ENCODE measurements at regions of chr12 and their contacts with region 1.

Region 1: DNA sequence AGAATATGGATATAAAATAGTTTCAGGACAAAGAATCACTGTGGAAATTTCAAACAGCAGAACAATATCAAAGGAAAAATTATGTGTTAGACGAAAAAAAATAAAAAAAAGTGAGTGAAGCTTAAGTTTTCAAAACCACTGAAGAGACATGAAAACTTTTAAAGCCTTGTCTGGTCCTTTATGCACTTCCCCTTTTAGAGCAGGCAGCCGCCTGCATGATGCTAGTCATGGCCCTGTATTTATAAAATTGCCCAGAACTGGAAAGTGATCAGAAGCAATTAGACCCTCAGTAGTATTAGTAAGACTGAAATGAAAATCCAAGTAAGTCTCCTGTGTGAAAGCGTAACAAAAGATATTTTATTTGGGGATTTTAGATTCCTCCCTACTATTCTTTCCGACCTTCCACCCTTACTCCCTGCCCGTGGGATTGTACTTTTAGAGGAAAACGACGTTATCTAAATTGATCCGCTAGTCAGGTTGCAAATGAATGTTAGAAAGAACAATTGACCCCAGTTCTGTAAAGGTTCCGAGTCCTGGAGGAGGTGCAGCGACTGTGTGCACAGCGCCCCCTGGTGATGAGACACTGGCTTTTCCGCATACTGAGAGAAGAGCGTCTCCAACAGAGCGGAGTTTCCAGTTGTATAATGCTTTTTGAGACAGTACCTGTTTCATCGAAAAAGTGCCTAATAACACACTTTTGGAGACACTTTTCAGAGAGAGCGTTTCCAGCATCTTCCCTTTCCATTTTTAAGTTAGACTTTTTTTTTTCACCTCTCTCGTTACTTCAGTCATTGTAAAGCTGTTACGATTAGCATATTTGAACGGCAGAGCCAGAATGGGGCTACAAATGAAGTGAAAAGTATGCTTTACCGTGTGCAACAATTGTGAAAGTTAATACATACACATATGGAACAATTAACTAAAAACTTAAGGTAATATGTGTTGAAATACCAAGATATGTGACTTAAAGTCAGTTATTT is 12.4 kb downstream of the MGST1 start:
- DNase-seq: peak; percentile 66
- H3K4me3 Mint-ChIP-seq: no peak overlapping the region
- H3K27ac Mint-ChIP-seq: peak overlapping the region; percentile 39
- H3K4me1 Mint-ChIP-seq: peaks cover 38% of the 10 kb centered on the region
- H3K27me3 Mint-ChIP-seq: no peaks in the 10 kb centered on the region
- CTCF ChIP-seq: peak; percentile 70

Region 2: DNA sequence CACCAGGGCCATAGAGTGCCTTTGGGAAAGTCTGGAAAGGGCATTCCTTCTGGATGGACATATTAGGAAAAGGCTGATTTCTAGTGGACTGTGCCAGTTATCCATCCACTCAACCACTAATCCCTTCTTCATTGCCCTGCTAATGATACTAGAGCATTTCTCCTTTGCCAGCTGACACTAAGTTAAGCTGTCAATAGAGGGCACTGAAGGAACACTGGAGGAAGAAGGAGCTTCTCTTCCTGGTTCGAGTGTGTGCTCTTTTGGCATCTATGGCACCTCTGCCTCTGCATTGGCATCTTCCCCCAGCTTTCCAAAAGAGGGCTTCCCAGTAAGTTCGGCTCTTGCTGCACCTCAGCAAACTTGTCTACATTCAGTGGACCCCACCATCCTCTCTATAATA is 283.2 kb before region 1 on chr12:
- CTCF ChIA-PET with region 1: no interaction called
- POLR2A ChIA-PET with region 1: no interaction called
- intact Hi-C with region 1: loop called (anchors 1 kb)
- DNase-seq: peak; percentile 69
- H3K4me3 Mint-ChIP-seq: no peak overlapping the region
- H3K27ac Mint-ChIP-seq: no peak overlapping the region
- H3K4me1 Mint-ChIP-seq: no peaks in the 10 kb centered on the region
- H3K27me3 Mint-ChIP-seq: no peaks in the 10 kb centered on the region
- CTCF ChIP-seq: peak; percentile 40

Region 3: DNA sequence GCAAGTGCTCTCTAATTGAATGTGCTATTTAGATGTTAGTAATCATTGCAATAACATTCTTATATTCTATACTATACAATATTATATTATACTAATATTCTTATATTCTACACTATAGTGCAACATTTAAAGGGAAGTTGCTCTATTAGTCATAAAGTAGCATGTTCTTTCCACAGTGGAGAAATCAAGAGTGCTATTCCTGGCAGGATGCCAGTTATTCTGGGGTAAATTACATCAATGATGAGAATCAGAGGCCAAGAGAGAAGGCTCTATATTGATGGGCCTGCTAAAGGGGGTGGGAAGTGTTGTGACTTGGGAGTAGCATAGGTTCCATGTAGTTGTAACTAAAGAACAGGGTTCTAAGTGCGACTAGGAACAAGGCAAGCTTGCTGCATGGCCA is 203.9 kb before region 1 on chr12:
- CTCF ChIA-PET with region 1: interaction called, 11 read pairs
- POLR2A ChIA-PET with region 1: no interaction called
- intact Hi-C with region 1: no loop called
- DNase-seq: peak; percentile 51
- H3K4me3 Mint-ChIP-seq: no peak overlapping the region
- H3K27ac Mint-ChIP-seq: no peak overlapping the region
- H3K4me1 Mint-ChIP-seq: peaks cover 14% of the 10 kb centered on the region
- H3K27me3 Mint-ChIP-seq: no peaks in the 10 kb centered on the region
- CTCF ChIP-seq: no peak

Region 4: DNA sequence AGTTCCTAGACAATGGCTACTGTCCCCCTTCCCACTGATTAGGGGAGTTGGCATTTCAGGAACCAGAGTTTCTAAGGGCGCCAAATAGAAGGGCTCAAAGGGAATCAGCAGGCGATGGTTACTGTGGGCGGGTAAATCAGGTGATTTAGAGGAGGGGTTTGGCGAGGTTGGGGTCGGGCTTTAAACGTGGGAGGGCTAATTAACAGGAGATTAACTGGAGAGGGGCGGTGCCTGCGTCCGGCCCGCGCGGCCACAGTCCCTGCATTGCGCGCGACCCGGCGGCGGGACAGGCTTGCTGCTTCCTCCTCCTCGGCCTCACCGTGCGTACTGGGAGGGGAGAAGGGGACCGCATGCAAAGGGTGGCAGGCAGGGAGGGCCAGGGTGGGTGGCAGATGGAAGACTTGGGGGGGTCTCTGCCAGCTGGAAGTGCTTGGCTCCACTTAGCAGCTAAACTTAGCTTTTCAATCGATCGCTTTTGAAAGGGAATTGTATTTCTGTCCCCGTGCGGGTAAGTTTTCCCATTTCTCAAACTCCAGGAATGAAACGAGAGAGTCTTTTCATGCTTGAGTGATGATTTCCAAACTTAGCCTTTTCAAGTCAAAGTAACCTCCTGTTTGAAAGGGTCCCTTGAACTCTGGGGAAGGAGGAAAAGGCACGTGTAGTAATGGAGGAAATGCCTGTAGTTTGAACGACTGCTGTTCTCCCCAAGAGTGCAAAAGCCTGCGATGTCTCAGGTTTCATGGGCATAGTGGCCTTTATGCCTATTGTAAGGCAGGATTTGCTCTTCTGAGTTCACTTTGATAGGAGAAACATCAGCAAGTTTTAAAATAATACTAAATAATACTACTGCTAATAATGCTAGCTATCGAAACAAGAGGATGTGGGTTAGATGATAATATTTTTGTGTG is 12.2 kb before region 1 on chr12 and contains the start of gene MGST1:
- CTCF ChIA-PET with region 1: interaction called, 20 read pairs
- POLR2A ChIA-PET with region 1: interaction called, 7 read pairs
- intact Hi-C with region 1: loop called (anchors 2 kb)
- DNase-seq: peak; percentile 85
- H3K4me3 Mint-ChIP-seq: peak within 1 kb of the TSS; percentile 85
- H3K27ac Mint-ChIP-seq: peak within 1 kb of the TSS; percentile 94
- H3K4me1 Mint-ChIP-seq: peaks cover 31% of the 10 kb centered on the region
- H3K27me3 Mint-ChIP-seq: no peaks in the 10 kb centered on the region
- CTCF ChIP-seq: no peak
- total RNA-seq, gene MGST1: 375 and 415 TPM in 2 replicates

Region 5: DNA sequence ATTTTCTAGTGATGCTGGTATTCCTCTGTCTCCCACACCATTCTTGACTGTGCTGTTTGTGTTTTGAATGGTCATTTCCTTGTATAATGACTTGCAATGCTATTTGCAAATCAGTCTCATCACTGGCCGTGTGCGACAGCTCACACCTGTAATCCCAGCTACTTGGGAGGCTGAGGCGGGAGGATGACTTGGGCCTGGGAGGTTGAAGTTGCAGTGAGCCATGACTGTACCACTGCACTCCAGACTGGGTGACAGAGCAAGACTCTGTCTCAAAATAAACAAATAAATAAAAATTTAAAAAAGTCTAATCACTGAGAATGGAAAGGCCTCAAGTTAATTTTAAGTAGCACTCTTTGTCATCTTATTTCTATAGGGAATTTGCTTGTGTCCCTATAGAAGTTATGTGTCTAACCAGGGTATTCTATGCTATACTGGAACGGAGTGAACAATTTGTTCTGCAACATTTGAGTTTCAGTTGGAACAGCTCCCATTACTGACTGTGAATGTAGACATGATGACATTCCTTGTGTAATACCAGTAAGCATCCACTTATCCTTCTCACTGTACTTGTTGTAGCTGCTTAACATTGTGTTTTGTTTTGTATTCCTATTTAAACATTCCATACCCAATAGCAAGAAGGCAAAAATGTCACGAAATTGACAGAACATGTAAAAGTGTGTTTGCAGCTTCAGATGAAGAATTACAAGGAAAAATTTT is 114.0 kb after region 1 on chr12:
- CTCF ChIA-PET with region 1: no interaction called
- POLR2A ChIA-PET with region 1: no interaction called
- intact Hi-C with region 1: no loop called
- DNase-seq: peak; percentile 53
- H3K4me3 Mint-ChIP-seq: no peak overlapping the region
- H3K27ac Mint-ChIP-seq: no peak overlapping the region
- H3K4me1 Mint-ChIP-seq: no peaks in the 10 kb centered on the region
- H3K27me3 Mint-ChIP-seq: no peaks in the 10 kb centered on the region
- CTCF ChIP-seq: no peak

Measured in MCF 10A (cell line).